Ovary (tissue), 10 donors: ENCODE measurements at regions of chr15 and their contacts with region 1.

Region 1: DNA sequence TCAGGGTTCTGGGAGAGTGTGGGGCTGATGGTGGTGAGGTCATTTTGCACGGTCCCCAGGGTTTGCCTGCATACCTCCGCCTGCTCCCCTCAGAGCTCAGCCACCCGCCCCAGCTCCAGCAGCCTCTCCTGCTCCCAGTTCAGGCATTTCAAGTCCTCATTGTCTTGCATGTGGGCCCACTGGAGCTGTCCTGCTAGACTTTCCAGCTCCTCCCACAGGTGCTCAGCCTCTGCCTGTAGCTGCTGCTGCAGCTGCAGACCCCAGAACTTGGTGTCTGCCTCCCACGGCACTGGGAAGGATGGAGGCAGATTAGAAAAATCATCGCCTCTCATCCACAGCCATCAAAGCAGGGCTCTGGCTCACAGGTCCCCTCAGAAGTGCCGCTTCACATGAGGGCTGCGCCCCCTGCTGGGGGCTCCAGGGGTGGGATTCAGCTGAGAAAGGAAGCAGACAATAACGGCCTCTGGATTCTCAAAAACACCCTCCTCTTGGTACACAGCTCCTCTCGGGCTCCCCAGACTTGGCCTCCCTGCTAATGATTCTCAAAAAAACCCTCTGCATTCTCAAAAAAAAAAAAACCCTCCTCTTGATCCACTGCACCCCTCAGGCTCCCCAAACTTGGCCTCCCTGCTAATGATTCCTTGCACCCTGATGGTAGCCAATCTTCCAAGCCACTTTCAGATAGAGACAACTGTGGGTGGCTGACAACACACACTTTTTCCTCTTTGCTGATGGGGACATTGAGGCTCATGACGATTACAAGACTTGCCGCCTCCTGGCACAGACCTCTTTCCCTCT is 89.3 kb upstream of the C2CD4B start:
- DNase-seq: peak in 4 of 5 donors; percentile 28 to 48 (median 30)
- H3K4me3 ChIP-seq: no peak overlapping the region
- H3K27ac ChIP-seq: no peak overlapping the region
- H3K4me1 ChIP-seq: no peaks in the 10 kb centered on the region
- H3K27me3 ChIP-seq: no peaks in the 10 kb centered on the region
- CTCF ChIP-seq: no peak
- EP300 ChIP-seq: no peak
- POLR2A ChIP-seq: no peak

Region 2: GRCh38 chr15:61130945-61131942 is 1123.1 kb before region 1 on chr15:
- intact Hi-C with region 1: no loop called
- DNase-seq: no peak
- H3K4me3 ChIP-seq: no peak overlapping the region
- H3K27ac ChIP-seq: no peak overlapping the region
- H3K4me1 ChIP-seq: peaks cover 2% of the 10 kb centered on the region
- H3K27me3 ChIP-seq: no peaks in the 10 kb centered on the region
- CTCF ChIP-seq: no peak
- EP300 ChIP-seq: no peak
- POLR2A ChIP-seq: no peak

Region 3: DNA sequence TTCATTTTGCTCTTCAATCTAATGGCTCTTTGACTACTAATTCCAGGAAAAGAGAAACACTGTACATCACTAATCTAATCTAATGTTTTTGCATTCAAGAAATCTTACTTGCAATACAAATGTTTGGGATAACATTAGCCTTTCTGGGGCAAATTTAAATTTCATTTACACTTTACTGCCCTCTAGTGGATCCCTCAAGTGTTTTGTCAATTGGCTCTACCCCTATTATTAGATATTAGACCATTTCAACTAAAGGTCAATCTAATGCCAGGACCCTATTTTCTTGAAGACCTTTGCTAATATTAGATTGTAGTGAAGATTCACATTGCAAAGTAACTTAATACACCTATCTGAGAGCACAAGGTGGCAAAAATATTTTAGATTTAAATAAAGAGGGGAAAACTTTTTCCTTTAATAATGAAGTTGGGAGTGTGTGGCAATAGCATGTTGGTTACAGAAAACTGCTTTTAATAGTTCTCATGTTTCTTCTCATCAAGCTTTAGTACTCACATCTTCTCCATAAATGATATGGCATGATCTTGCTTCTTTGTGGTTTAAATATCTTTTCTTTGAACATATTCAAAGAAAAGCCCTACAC is 182.5 kb before region 1 on chr15:
- intact Hi-C with region 1: loop called in 1 of 4 experiments (anchors 10 kb)
- DNase-seq: no peak
- H3K4me3 ChIP-seq: no peak overlapping the region
- H3K27ac ChIP-seq: no peak overlapping the region
- H3K4me1 ChIP-seq: peaks cover 3% of the 10 kb centered on the region
- H3K27me3 ChIP-seq: no peaks in the 10 kb centered on the region
- CTCF ChIP-seq: peak; percentile 24 to 43 (median 32)
- EP300 ChIP-seq: no peak
- POLR2A ChIP-seq: no peak

Region 4: DNA sequence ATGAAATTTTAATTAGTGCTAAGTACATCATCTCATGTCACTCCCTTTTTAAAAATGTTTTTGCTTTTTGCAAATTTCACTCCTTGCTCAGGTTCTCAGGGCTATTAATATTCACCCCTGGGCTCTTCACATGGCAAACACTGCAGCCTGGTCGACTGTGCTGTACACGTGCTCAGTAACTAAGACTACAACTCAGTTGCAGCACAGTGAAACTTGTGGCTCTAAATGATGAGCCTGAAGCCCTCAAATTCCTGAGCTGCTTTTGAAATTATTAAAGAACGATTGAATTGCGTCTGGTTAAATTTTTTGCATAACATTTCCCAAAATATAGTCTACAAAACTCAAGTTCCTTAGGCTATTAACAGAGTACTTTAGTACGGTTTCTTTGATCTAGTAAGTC is 70.0 kb after region 1 on chr15:
- intact Hi-C with region 1: loop called in 1 of 4 experiments (anchors 10 kb)
- DNase-seq: no peak
- H3K4me3 ChIP-seq: no peak overlapping the region
- H3K27ac ChIP-seq: no peak overlapping the region
- H3K4me1 ChIP-seq: no peaks in the 10 kb centered on the region
- H3K27me3 ChIP-seq: no peaks in the 10 kb centered on the region
- CTCF ChIP-seq: no peak
- EP300 ChIP-seq: no peak
- POLR2A ChIP-seq: no peak